ENCODE measurements at regions of chr1 and their contacts with region 1.

Region 1: DNA sequence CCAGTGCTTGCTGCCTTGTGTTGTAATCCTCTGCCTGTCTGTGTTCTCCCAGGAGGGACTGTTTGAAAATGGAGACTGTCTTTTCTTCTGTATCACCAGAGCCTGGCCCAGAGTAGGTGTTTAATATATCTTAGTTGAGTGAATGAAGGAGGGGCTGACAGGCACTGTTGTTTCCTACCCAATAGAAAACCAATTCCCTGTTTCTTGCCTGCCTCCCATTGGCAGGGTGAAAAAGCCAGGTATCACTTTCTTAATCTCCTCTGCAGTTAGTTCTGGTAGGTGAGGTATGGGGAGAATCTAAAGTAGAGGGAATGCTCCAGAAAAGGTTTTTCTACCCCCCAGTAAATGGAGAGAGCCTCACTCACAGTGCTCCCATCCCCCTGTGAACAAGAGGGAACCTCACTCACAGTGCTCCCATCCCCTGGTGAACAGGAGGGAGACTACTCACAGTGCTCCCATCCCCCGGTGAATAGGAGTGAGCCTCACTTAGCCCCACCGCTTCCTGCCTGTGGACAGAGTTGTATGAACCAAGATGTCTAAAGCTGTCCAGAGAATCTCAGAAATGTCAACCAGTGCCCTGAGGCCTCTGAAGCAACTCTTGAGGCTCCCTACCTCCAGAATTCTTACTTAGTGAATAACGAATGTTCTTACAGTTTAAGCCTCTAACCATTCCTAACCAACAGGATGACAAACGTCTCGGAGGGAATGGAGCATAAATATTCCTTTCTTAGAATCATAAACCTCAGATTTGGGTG is at the start of gene GJA5:
- DNase-seq: no peak
- ATAC-seq: no peak
- H3K4me3 ChIP-seq: no peak within 1 kb of the TSS
- H3K27ac ChIP-seq: peak within 1 kb of the TSS in 6 of 10 donors; percentile 46 to 80 (median 70)
- H3K4me1 ChIP-seq: peaks cover 0 to 71% (median 32%) of the 10 kb centered on the region in 9 donors
- H3K27me3 ChIP-seq: no peaks in the 10 kb centered on the region
- CTCF ChIP-seq: no peak
- total RNA-seq, gene GJA5: 7.6 to 20.0 (median 12.8) TPM

Region 2: DNA sequence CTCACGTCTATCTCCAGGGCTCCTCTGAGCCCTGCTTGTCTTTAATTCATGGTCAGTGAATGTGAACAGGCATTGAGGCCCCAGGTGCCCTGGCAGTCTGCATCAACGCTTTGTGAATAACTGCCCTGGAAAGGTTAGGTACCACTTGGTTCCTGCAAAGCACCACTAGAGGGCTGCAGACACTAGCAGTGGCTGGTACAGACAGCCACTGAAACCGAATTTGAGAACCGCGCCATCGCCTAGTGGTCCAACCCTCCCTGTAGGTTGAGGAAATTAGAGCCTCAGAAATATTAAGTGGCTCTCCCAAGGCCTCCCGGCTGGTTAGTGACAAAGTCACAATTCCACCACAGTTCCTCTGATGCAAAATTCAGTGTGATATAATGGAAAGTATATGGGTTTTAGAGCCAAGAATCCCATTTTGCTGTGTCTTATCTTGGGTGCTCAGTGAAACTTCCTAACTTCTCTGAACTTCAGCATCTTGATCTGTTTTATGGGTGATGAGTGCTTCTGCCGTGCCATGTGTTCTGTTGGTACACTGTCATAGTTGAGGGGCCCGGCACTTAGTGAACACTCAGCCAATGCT is 265.6 kb before region 1 on chr1:
- intact Hi-C with region 1: no loop called
- DNase-seq: peak; percentile 51 to 79
- ATAC-seq: peak; percentile 84 to 96 (median 92)
- H3K4me3 ChIP-seq: no peak overlapping the region
- H3K27ac ChIP-seq: no peak overlapping the region
- H3K4me1 ChIP-seq: peaks cover 0 to 31% (median 19%) of the 10 kb centered on the region in 9 donors
- H3K27me3 ChIP-seq: no peaks in the 10 kb centered on the region
- CTCF ChIP-seq: peak; percentile 80 to 97 (median 93)

Region 3: DNA sequence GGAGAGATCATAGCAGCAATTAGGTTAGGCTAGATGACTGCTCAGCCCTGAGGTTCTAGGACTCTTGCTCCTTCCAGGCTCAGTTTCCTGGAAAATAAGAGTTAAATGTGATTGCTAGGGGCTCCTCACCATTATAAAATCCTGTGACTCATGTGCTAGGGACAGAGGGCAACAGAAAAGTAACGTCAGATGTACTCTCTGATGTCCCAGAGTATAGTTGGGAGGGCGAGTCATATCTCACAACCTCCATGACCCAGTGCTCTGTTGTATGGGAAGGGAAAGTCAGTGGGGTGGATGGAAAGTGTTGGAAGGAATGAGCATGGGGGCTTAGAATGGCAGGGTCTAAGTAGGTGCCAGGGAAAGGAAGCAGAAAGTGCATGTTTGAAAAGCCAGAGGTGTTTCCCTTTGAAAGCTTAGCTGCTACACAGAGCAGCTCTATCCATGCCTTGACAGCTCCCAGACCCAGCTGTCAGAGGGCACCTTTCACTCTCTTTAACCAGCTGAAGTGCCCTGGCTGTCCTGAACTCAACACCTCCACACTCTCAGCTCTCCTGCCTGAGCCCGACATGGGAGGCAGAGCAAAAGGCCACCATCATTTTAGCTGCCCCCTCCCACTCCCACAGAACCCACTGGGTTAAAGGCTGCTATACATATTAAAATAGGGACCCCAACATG is 11.9 kb before region 1 on chr1:
- intact Hi-C with region 1: loop called in 1 of 10 experiments (anchors 1 kb)
- DNase-seq: peak in 1 of 2 donors; percentile 48
- ATAC-seq: peak; percentile 87 to 96 (median 93)
- H3K4me3 ChIP-seq: no peak overlapping the region
- H3K27ac ChIP-seq: peak overlapping the region in 5 of 10 donors; percentile 16 to 76 (median 70)
- H3K4me1 ChIP-seq: peaks cover 0 to 16% (median 11%) of the 10 kb centered on the region in 9 donors
- H3K27me3 ChIP-seq: no peaks in the 10 kb centered on the region
- CTCF ChIP-seq: no peak

Measured in heart right ventricle (tissue), 16 donors.